CD4-positive, alpha-beta T cell (primary cell): ENCODE measurements at regions of chrX and their contacts with region 1.

Region 1: GRCh38 chrX:133380711-133381619 is 34.3 kb downstream of the GPC4 start:
- DNase-seq: no peak
- ATAC-seq: no peak
- H3K4me3 ChIP-seq: no peak overlapping the region
- H3K4me3 Mint-ChIP-seq: no peak overlapping the region
- H3K27ac ChIP-seq: no peak overlapping the region
- H3K27ac Mint-ChIP-seq: no peak overlapping the region
- H3K4me1 ChIP-seq: no peaks in the 10 kb centered on the region
- H3K4me1 Mint-ChIP-seq: no peaks in the 10 kb centered on the region
- H3K27me3 ChIP-seq: no peaks in the 10 kb centered on the region
- H3K27me3 Mint-ChIP-seq: no peaks in the 10 kb centered on the region
- CTCF ChIP-seq: no peak

Region 2: DNA sequence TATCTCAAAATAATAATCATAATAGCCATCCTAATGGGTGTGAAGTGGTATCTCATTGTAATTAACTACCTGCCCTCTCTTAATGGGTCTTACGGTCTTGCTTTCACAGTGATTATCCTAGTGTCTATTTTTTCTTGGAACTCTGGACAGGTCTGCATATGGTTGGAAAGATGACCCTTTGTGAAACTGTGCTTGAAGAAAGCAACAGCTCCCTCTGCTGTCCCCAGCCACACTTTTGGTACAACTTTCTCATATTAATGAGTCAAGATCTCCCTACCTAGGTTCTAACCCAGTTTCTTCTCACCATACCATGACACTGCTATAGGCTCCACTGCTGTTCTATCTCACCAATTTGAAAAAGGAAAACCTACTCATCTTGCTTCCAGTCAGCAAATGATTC is 165.2 kb before region 1 on chrX:
- CTCF ChIA-PET with region 1: no interaction called
- POLR2A ChIA-PET with region 1: no interaction called
- intact Hi-C with region 1: no loop called
- DNase-seq: no peak
- ATAC-seq: no peak
- H3K4me3 ChIP-seq: no peak overlapping the region
- H3K4me3 Mint-ChIP-seq: no peak overlapping the region
- H3K27ac ChIP-seq: no peak overlapping the region
- H3K27ac Mint-ChIP-seq: no peak overlapping the region
- H3K4me1 ChIP-seq: no peaks in the 10 kb centered on the region
- H3K4me1 Mint-ChIP-seq: no peaks in the 10 kb centered on the region
- H3K27me3 ChIP-seq: no peaks in the 10 kb centered on the region
- H3K27me3 Mint-ChIP-seq: peaks cover 5% of the 10 kb centered on the region
- CTCF ChIP-seq: no peak

Region 3: GRCh38 chrX:133417364-133417763 is 36.4 kb after region 1 on chrX:
- CTCF ChIA-PET with region 1: no interaction called
- POLR2A ChIA-PET with region 1: no interaction called
- intact Hi-C with region 1: loop called in 1 of 2 experiments (anchors 2 kb)
- DNase-seq: no peak
- ATAC-seq: no peak
- H3K4me3 ChIP-seq: no peak overlapping the region
- H3K4me3 Mint-ChIP-seq: no peak overlapping the region
- H3K27ac ChIP-seq: no peak overlapping the region
- H3K27ac Mint-ChIP-seq: no peak overlapping the region
- H3K4me1 ChIP-seq: no peaks in the 10 kb centered on the region
- H3K4me1 Mint-ChIP-seq: no peaks in the 10 kb centered on the region
- H3K27me3 ChIP-seq: peaks cover 0 to 52% of the 10 kb centered on the region in 2 experiments
- H3K27me3 Mint-ChIP-seq: peaks cover 53% of the 10 kb centered on the region
- CTCF ChIP-seq: no peak